Tibial artery (tissue), 4 donors: ENCODE measurements at regions of chr2 and their contacts with region 1.

Region 1: GRCh38 chr2:41414486-41415230 is 633.2 kb upstream of the PKDCC start:
- DNase-seq: no peak
- H3K4me3 ChIP-seq: no peak overlapping the region
- H3K27ac ChIP-seq: no peak overlapping the region
- H3K4me1 ChIP-seq: no peaks in the 10 kb centered on the region
- H3K27me3 ChIP-seq: no peaks in the 10 kb centered on the region
- CTCF ChIP-seq: peak; percentile 43 to 46

Region 2: GRCh38 chr2:41283079-41283775 is 131.4 kb before region 1 on chr2:
- intact Hi-C with region 1: no loop called
- DNase-seq: no peak
- H3K4me3 ChIP-seq: no peak overlapping the region
- H3K27ac ChIP-seq: no peak overlapping the region
- H3K4me1 ChIP-seq: no peaks in the 10 kb centered on the region
- H3K27me3 ChIP-seq: no peaks in the 10 kb centered on the region
- CTCF ChIP-seq: no peak

Region 3: DNA sequence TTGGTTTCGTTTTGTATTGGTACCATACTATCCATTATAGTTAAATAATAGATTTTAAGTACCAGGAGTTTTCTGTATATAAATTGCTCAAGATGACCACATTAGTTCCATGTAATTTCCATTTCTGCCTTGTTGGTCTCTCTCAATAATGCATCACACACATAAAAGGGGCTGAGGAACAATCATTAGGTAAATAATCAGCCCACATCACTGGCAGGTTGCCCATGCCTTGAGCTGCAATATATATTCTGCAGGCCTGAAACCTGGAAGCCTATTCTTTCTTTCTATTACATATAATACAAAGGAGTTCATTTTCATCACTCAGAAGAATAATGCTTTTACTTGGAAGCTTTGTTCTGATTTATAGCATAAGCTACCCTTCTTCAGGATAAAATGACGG is 17.1 kb after region 1 on chr2:
- intact Hi-C with region 1: no loop called
- DNase-seq: no peak
- H3K4me3 ChIP-seq: no peak overlapping the region
- H3K27ac ChIP-seq: no peak overlapping the region
- H3K4me1 ChIP-seq: peaks cover 0 to 13% (median 0%) of the 10 kb centered on the region in 4 donors
- H3K27me3 ChIP-seq: no peaks in the 10 kb centered on the region
- CTCF ChIP-seq: no peak

Region 4: DNA sequence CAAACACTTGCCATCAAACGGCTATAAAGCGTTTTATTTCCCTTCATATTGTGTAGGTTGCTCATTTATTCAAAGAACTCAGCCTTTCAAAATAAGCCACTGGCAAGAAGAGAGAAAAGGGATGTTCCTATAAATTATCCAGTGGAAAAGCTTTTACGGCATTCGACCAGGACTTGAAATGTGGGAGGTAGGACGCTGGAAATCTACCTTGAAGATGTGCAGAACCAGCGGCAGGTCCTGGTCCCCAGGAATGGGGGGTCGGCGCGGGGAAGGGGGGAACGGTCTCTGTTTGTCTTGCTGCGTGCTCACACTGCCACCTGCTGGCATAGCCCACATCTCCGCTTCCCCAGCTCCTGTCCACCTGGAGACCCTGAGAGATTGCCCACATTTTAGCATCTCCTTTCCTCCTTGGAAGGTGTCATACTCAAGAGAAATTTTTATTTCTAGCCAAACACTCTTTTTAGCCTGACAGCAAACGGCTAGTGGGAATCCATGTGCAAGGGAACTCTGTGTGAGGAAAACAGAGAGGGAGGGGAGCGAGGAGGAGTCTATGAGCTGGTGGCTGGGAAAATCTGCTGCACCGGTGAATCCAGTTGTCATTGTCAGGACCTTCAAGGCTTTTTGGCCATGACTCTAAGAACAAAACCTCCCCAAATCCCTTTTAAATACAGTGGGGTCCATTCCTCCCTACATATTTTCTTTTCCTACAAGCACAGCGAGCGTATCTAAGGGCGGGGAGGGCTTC is 284.2 kb after region 1 on chr2:
- intact Hi-C with region 1: loop called (anchors 5 kb)
- DNase-seq: peak in 1 of 2 donors; percentile 68
- H3K4me3 ChIP-seq: peak overlapping the region; percentile 26 to 42
- H3K27ac ChIP-seq: no peak overlapping the region
- H3K4me1 ChIP-seq: peaks cover 0 to 15% (median 4%) of the 10 kb centered on the region in 4 donors
- H3K27me3 ChIP-seq: no peaks in the 10 kb centered on the region
- CTCF ChIP-seq: peak; percentile 82 to 94